Naive thymus-derived CD4-positive, alpha-beta T cell (primary cell): ENCODE measurements at regions of chr10 and their contacts with region 1.

Region 1: DNA sequence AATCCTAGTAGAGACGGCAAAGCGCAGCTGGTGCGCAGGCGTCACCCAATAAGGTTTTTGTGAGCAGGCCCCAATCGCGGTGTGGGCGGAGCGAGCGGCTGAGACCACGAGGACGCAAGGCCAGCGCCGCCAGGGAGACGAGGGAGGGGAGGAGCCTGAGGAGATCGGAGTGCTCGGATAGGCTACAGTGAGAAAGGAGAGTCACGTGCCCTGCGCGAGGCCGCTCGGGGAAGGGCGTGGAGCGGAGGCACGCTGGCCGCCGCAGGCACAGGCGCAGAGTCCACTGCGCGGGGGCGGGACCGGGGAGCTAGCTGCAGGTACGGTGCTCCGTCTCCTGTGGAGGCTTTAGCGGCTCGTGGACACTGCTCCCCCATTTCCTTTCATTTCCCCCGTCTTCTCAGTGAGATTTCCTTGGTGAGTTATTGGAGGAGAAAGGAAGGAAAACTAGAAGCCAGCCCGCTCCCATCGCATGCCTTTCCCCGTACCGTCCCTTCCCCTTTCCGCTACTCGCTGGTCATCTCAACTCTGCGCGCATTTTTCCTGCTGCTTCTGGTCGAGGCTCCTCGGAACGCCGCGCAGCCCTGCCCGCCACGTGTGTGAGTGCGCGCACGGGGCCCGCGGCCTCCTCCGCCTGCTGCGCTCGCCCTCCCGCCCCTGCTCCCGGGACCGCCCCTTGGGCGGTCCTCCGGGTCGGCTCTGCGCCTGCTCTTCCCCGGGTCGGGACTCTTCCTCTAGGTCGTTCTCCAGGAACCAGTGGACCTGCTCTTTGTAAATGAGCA is at the start of gene THNSL1:
- DNase-seq: peak; percentile 90 to 99 (median 96)
- ATAC-seq: peak; percentile 97
- H3K4me3 ChIP-seq: peak within 1 kb of the TSS; percentile 76
- H3K4me3 Mint-ChIP-seq: peak within 1 kb of the TSS; percentile 87 to 98 (median 90)
- H3K27ac ChIP-seq: peak within 1 kb of the TSS; percentile 82
- H3K27ac Mint-ChIP-seq: peak within 1 kb of the TSS; percentile 91 to 99 (median 94)
- H3K4me1 ChIP-seq: peaks cover 0 to 8% of the 10 kb centered on the region in 2 donors
- H3K4me1 Mint-ChIP-seq: peaks cover 11 to 43% (median 32%) of the 10 kb centered on the region in 7 donors
- H3K27me3 ChIP-seq: no peaks in the 10 kb centered on the region
- H3K27me3 Mint-ChIP-seq: peaks cover 0 to 10% (median 0%) of the 10 kb centered on the region in 5 donors
- total RNA-seq, gene THNSL1: 1.4 to 10.6 (median 2.5) TPM

Region 2: DNA sequence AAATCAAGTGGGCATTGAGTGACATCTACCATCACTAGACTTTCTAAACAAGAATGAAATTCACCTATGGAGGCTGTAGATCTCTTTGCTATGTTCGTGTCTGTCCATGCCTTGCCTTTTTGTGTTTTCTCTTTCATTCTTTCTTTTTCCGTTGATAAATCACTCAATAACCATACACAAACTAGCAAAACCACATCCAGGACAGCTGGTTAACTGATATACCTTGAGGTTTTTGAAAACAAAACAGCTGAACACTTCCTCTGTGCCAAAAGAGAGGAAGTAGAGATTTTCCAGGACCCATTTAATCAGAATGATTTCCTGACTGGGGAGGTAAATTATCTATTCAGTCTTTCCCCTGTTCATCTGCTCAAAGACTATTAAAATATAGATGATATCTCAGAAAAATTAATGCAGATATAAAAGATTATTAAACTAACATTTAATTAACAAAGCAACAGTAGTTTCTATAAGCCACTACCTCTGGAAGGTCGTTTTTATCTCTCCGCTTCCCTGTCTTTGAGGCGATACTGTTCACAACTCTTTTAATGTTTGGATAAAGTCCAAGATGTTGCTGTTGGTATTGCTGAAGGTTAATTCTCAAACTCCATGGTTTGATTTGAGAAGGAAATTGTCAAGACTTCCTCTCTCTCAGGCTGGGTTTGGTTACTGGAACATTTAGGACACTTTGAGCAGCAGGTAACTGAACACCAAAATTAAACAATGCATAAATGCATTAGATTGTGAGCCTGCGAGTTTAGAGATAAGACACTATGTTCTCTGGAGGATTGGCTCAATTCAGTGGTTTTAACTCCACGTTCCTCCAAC is 1647.5 kb before region 1 on chr10:
- CTCF ChIA-PET with region 1: no interaction called
- POLR2A ChIA-PET with region 1: no interaction called
- intact Hi-C with region 1: loop called in 1 of 2 experiments (anchors 10 kb)
- DNase-seq: peak in 7 of 9 donors; percentile 33 to 73 (median 64)
- ATAC-seq: peak; percentile 70
- H3K4me3 ChIP-seq: peak overlapping the region; percentile 20
- H3K4me3 Mint-ChIP-seq: peak overlapping the region; percentile 54 to 89 (median 72)
- H3K27ac ChIP-seq: no peak overlapping the region
- H3K27ac Mint-ChIP-seq: peak overlapping the region; percentile 5 to 75 (median 51)
- H3K4me1 ChIP-seq: peaks cover 28 to 33% of the 10 kb centered on the region in 2 donors
- H3K4me1 Mint-ChIP-seq: peaks cover 33 to 63% (median 53%) of the 10 kb centered on the region in 7 donors
- H3K27me3 ChIP-seq: no peaks in the 10 kb centered on the region
- H3K27me3 Mint-ChIP-seq: no peaks in the 10 kb centered on the region

Region 3: GRCh38 chr10:24617771-24618391 is 398.7 kb before region 1 on chr10:
- CTCF ChIA-PET with region 1: interaction called, 4 read pairs
- POLR2A ChIA-PET with region 1: interaction called, 13 read pairs
- intact Hi-C with region 1: loop called in 1 of 2 experiments (anchors 1 kb)
- DNase-seq: peak; percentile 28 to 62 (median 46)
- ATAC-seq: peak; percentile 58
- H3K4me3 ChIP-seq: no peak overlapping the region
- H3K4me3 Mint-ChIP-seq: peak overlapping the region in 9 of 10 donors; percentile 34 to 75 (median 69)
- H3K27ac ChIP-seq: peak overlapping the region; percentile 5
- H3K27ac Mint-ChIP-seq: peak overlapping the region in 8 of 9 donors; percentile 65 to 97 (median 91)
- H3K4me1 ChIP-seq: peaks cover 0 to 16% of the 10 kb centered on the region in 2 donors
- H3K4me1 Mint-ChIP-seq: peaks cover 11 to 55% (median 42%) of the 10 kb centered on the region in 7 donors
- H3K27me3 ChIP-seq: no peaks in the 10 kb centered on the region
- H3K27me3 Mint-ChIP-seq: no peaks in the 10 kb centered on the region

Region 4: GRCh38 chr10:24882047-24882698 is 134.4 kb before region 1 on chr10:
- CTCF ChIA-PET with region 1: no interaction called
- POLR2A ChIA-PET with region 1: no interaction called
- intact Hi-C with region 1: loop called (anchors 1 kb)
- DNase-seq: peak in 7 of 9 donors; percentile 42 to 68 (median 63)
- ATAC-seq: peak; percentile 81
- H3K4me3 ChIP-seq: peak overlapping the region; percentile 44
- H3K4me3 Mint-ChIP-seq: peak overlapping the region; percentile 72 to 88 (median 86)
- H3K27ac ChIP-seq: peak overlapping the region; percentile 53
- H3K27ac Mint-ChIP-seq: peak overlapping the region; percentile 36 to 99 (median 95)
- H3K4me1 ChIP-seq: peaks cover 15 to 54% of the 10 kb centered on the region in 2 donors
- H3K4me1 Mint-ChIP-seq: peaks cover 27 to 72% (median 65%) of the 10 kb centered on the region in 7 donors
- H3K27me3 ChIP-seq: no peaks in the 10 kb centered on the region
- H3K27me3 Mint-ChIP-seq: no peaks in the 10 kb centered on the region

Region 5: DNA sequence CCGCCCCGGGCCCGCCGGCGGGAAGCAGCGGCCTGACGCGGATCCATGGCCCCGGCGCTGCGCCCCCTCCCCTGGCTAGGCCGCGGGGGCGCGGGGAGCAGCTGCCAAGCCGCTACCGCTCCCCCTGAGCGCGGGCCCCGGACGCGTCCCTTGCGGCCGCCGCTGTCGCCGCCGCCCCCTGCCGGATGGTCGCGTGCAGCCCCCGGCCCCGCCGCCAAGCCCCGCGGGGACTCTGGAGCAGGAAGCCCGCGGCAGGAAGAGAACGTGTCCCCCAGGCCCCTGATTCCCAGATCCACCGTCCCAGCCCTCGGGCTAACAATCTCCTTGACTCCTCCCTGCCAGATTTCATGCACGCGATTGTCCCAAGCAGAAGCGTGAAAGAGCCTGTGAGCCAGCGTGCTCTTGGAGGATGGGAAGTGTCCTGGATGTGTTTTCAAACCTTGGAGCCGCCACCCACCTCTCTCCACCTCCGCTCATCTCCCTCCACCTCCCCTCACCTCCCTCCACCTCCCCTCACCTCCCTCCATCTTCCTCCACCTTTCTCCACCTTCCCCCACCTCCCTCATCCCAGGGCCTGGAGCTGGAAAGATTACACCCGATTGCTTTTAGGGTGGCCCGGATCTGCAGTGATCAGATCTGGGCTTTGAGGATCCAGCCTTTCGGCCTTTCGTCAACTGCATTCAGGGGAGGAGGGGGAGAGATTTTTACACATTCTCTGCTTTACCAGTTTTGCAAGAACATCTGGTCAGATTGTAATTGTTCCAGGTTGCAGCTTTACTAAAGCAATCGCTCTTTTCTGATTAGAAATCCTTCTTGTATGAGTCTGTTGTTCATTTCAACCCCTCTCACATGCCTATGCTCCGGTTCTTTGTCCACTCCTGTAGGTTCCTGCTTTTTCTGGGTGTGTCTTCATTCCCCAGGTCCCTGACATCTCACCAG is 63.6 kb before region 1 on chr10:
- CTCF ChIA-PET with region 1: no interaction called
- POLR2A ChIA-PET with region 1: interaction called, 3 read pairs
- intact Hi-C with region 1: loop called (anchors 1 kb)
- DNase-seq: peak; percentile 31 to 66 (median 55)
- ATAC-seq: peak; percentile 89
- H3K4me3 ChIP-seq: peak overlapping the region; percentile 55
- H3K4me3 Mint-ChIP-seq: peak overlapping the region; percentile 76 to 89 (median 86)
- H3K27ac ChIP-seq: peak overlapping the region; percentile 59
- H3K27ac Mint-ChIP-seq: peak overlapping the region; percentile 49 to 91 (median 83)
- H3K4me1 ChIP-seq: peaks cover 4 to 6% of the 10 kb centered on the region in 2 donors
- H3K4me1 Mint-ChIP-seq: peaks cover 7 to 30% (median 18%) of the 10 kb centered on the region in 7 donors
- H3K27me3 ChIP-seq: no peaks in the 10 kb centered on the region
- H3K27me3 Mint-ChIP-seq: no peaks in the 10 kb centered on the region

Region 6: GRCh38 chr10:25080880-25081581 is 64.5 kb after region 1 on chr10:
- CTCF ChIA-PET with region 1: no interaction called
- POLR2A ChIA-PET with region 1: no interaction called
- intact Hi-C with region 1: loop called (anchors 1 to 5 kb)
- DNase-seq: peak; percentile 4 to 53 (median 42)
- ATAC-seq: peak; percentile 79
- H3K4me3 ChIP-seq: no peak overlapping the region
- H3K4me3 Mint-ChIP-seq: no peak overlapping the region
- H3K27ac ChIP-seq: no peak overlapping the region
- H3K27ac Mint-ChIP-seq: no peak overlapping the region
- H3K4me1 ChIP-seq: peaks cover 0 to 4% of the 10 kb centered on the region in 2 donors
- H3K4me1 Mint-ChIP-seq: peaks cover 0 to 8% (median 4%) of the 10 kb centered on the region in 7 donors
- H3K27me3 ChIP-seq: peaks cover 0 to 4% of the 10 kb centered on the region in 2 donors
- H3K27me3 Mint-ChIP-seq: peaks cover 0 to 23% (median 5%) of the 10 kb centered on the region in 5 donors

Region 7: GRCh38 chr10:25142116-25142864 is 125.7 kb after region 1 on chr10:
- CTCF ChIA-PET with region 1: no interaction called
- POLR2A ChIA-PET with region 1: no interaction called
- intact Hi-C with region 1: no loop called
- DNase-seq: no peak
- ATAC-seq: no peak
- H3K4me3 ChIP-seq: no peak overlapping the region
- H3K4me3 Mint-ChIP-seq: no peak overlapping the region
- H3K27ac ChIP-seq: no peak overlapping the region
- H3K27ac Mint-ChIP-seq: no peak overlapping the region
- H3K4me1 ChIP-seq: no peaks in the 10 kb centered on the region
- H3K4me1 Mint-ChIP-seq: no peaks in the 10 kb centered on the region
- H3K27me3 ChIP-seq: no peaks in the 10 kb centered on the region
- H3K27me3 Mint-ChIP-seq: peaks cover 0 to 17% (median 9%) of the 10 kb centered on the region in 5 donors